ENCODE measurements at regions of chr2 and their contacts with region 1.

Region 1: GRCh38 chr2:197378494-197379307 is 56.1 kb downstream of the SF3B1 start:
- DNase-seq: peak; percentile 24 to 78 (median 62)
- ATAC-seq: peak; percentile 57
- H3K4me3 ChIP-seq: no peak overlapping the region
- H3K4me3 Mint-ChIP-seq: no peak overlapping the region
- H3K27ac ChIP-seq: no peak overlapping the region
- H3K27ac Mint-ChIP-seq: no peak overlapping the region
- H3K4me1 ChIP-seq: peaks cover 7% of the 10 kb centered on the region
- H3K4me1 Mint-ChIP-seq: peaks cover 12% of the 10 kb centered on the region
- H3K27me3 ChIP-seq: no peaks in the 10 kb centered on the region
- H3K27me3 Mint-ChIP-seq: no peaks in the 10 kb centered on the region
- CTCF ChIP-seq: peak; percentile 93

Region 2: DNA sequence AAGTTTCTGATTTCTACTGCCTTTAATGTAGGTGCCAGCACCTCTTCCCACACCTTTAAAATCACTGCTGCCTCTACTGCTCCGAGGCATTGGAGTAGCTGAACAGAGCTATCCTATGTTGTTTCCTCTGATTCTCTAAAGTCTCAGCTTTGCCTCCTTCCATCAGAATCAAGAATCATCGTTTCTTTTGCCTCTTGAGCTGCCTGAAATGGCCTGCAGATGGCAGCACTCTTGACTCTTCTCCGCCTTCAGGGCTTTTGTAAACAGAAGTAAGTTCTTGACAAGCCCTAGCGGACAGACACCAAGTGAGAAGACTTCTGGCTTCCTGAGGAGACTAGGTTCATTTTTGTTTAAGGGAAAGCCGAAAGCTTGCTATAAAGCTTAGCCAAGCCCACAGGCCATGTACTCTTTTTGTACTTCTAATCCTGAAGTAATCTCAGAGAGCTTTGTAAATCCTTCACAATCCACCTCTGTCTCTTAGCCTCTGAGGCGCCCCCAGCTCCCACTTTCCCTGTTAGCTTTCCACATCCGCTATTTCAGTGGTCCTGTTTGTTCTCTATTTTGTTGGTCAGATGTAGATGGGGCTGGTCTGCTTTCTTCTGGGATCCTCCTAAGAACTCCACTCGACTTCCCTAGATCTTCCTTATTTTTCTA is 627.6 kb before region 1 on chr2:
- CTCF ChIA-PET with region 1: interaction called, 4 read pairs
- POLR2A ChIA-PET with region 1: no interaction called
- intact Hi-C with region 1: loop called in 1 of 2 experiments (anchors 2 kb)
- DNase-seq: peak; percentile 30 to 73 (median 54)
- ATAC-seq: peak; percentile 93
- H3K4me3 ChIP-seq: no peak overlapping the region
- H3K4me3 Mint-ChIP-seq: no peak overlapping the region
- H3K27ac ChIP-seq: no peak overlapping the region
- H3K27ac Mint-ChIP-seq: peak overlapping the region; percentile 14
- H3K4me1 ChIP-seq: peaks cover 3% of the 10 kb centered on the region
- H3K4me1 Mint-ChIP-seq: peaks cover 11% of the 10 kb centered on the region
- H3K27me3 ChIP-seq: no peaks in the 10 kb centered on the region
- H3K27me3 Mint-ChIP-seq: no peaks in the 10 kb centered on the region
- CTCF ChIP-seq: peak; percentile 67

Region 3: DNA sequence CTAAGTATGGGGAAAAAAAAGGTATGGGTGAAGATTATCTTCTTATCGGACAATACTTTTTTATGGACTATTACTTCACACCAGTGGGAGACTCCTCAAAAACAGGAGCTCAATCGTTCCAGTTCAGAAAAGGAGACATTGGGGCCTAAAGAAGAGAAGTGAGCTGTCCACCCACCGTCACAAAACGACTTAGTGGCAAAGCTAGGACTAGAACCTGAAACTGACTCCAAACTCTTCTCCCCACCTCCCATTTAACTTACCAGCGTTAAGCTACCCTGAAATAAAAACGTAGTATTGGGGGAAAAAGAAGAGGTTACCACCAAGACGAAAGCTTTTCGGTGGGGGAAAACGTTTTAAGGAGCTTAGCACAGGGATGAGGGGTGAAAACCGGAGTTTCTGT is 579.7 kb before region 1 on chr2:
- CTCF ChIA-PET with region 1: no interaction called
- POLR2A ChIA-PET with region 1: no interaction called
- intact Hi-C with region 1: loop called in 1 of 2 experiments (anchors 5 kb)
- DNase-seq: no peak
- ATAC-seq: peak; percentile 7
- H3K4me3 ChIP-seq: peak overlapping the region; percentile 71 to 76
- H3K4me3 Mint-ChIP-seq: peak overlapping the region; percentile 100
- H3K27ac ChIP-seq: peak overlapping the region; percentile 65 to 74
- H3K27ac Mint-ChIP-seq: peak overlapping the region; percentile 99
- H3K4me1 ChIP-seq: peaks cover 10% of the 10 kb centered on the region
- H3K4me1 Mint-ChIP-seq: peaks cover 36% of the 10 kb centered on the region
- H3K27me3 ChIP-seq: no peaks in the 10 kb centered on the region
- H3K27me3 Mint-ChIP-seq: peaks cover 12% of the 10 kb centered on the region
- CTCF ChIP-seq: no peak

Region 4: DNA sequence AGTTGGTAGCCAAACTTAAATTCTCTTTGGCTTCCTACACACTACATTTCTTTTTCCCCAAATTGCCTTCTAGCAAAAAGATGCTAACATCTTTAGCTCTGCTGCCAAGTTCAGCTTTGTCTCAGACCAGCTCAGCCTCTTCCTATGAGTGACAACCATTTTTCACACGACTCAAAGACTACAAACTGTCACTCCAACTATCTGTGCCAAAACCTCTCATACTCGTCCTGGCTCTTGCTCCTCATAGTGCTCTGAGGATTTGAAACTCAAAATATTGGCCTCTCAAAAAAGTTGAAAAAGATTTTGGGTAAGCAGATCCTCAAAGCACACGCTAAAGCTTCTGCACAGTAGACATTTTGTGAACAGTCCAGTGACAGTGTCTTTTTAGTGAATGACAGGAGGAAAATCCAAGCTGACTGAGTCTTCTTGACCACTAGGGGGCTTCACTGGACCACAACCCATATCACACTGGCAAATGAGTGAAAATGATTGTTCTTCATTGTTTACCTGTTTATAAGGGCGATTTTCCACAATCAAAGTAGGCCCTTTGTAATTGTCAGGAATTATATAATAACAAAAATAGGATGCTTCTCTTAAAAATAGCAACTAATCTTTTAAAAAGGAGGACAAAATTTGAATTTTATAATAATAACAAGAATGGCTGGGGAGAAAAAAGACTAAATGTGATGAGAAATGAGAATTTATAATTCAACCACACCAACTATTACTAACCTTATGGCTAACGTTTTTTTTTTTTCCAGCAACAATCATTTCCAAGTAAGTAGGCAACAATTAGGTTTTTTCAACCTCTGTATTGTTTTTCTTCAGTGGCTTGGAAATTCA is 366.7 kb before region 1 on chr2:
- CTCF ChIA-PET with region 1: interaction called, 10 read pairs
- POLR2A ChIA-PET with region 1: no interaction called
- intact Hi-C with region 1: loop called (anchors 1 kb)
- DNase-seq: peak in 3 of 9 experiments; percentile 14 to 69 (median 57)
- ATAC-seq: peak; percentile 59
- H3K4me3 ChIP-seq: no peak overlapping the region
- H3K4me3 Mint-ChIP-seq: no peak overlapping the region
- H3K27ac ChIP-seq: no peak overlapping the region
- H3K27ac Mint-ChIP-seq: peak overlapping the region; percentile 46
- H3K4me1 ChIP-seq: no peaks in the 10 kb centered on the region
- H3K4me1 Mint-ChIP-seq: peaks cover 6% of the 10 kb centered on the region
- H3K27me3 ChIP-seq: no peaks in the 10 kb centered on the region
- H3K27me3 Mint-ChIP-seq: no peaks in the 10 kb centered on the region
- CTCF ChIP-seq: peak; percentile 78

Region 5: GRCh38 chr2:197174539-197175094 is 204.1 kb before region 1 on chr2:
- CTCF ChIA-PET with region 1: interaction called, 3 read pairs
- POLR2A ChIA-PET with region 1: no interaction called
- intact Hi-C with region 1: loop called (anchors 5 kb)
- DNase-seq: peak in 1 of 9 experiments; percentile 23
- ATAC-seq: peak; percentile 36
- H3K4me3 ChIP-seq: no peak overlapping the region
- H3K4me3 Mint-ChIP-seq: no peak overlapping the region
- H3K27ac ChIP-seq: no peak overlapping the region
- H3K27ac Mint-ChIP-seq: peak overlapping the region; percentile 66
- H3K4me1 ChIP-seq: peaks cover 45% of the 10 kb centered on the region
- H3K4me1 Mint-ChIP-seq: peaks cover 73% of the 10 kb centered on the region
- H3K27me3 ChIP-seq: no peaks in the 10 kb centered on the region
- H3K27me3 Mint-ChIP-seq: no peaks in the 10 kb centered on the region
- CTCF ChIP-seq: no peak